IMR-90 (cell line): ENCODE measurements at regions of chr19 and their contacts with region 1.

Region 1: DNA sequence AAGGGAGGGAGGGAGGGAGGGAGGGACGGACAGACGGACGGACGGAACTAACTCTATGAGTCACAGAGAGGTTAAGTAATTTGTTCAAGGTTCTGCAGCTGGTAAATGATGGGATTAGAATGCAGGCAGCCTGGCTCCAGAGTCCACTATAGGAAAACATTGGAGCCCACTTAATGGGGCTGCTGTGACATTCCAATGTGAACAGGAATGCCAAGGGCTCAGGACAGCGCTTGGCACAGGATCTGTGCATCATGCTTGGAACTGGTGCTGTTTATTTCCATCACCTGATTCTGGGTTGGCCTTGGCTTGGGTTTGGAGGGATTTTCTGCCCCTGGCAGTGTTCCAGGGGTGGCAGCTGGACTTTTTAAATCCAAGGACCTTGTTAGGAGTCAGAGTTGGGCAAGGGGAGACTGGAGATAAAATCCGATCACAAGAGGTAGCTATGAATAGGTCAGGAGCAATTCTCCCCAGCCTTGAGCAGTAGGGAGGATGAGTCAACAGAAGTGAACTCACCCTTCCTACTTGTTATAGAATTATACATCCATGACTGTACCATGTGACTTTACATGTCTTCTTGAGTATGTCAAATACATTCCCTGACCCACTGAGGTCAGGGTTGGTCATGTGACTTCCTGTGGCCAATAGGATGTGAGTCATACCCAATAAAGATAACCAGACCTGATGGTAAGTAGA is 7.8 kb upstream of the HIF3A start:
- DNase-seq: peak; percentile 82
- ATAC-seq: peak; percentile 84
- H3K4me3 ChIP-seq: no peak overlapping the region
- H3K27ac ChIP-seq: no peak overlapping the region
- H3K4me1 ChIP-seq: no peaks in the 10 kb centered on the region; the same call in 1 of the 2 replicates
- H3K27me3 ChIP-seq: peaks cover under 1% of the 10 kb centered on the region
- CTCF ChIP-seq: no peak
- POLR2A ChIP-seq: no peak
- RAD21 ChIP-seq: no peak

Region 2: GRCh38 chr19:46337487-46337886 is 48.4 kb after region 1 on chr19:
- CTCF ChIA-PET with region 1: no interaction called
- POLR2A ChIA-PET with region 1: no interaction called
- dilution Hi-C with region 1: no loop called
- in situ Hi-C with region 1: no loop called
- intact Hi-C with region 1: no loop called
- DNase-seq: no peak
- ATAC-seq: no peak
- H3K4me3 ChIP-seq: no peak overlapping the region
- H3K27ac ChIP-seq: no peak overlapping the region
- H3K4me1 ChIP-seq: no peaks in the 10 kb centered on the region
- H3K27me3 ChIP-seq: peaks cover 29% of the 10 kb centered on the region
- CTCF ChIP-seq: no peak
- POLR2A ChIP-seq: no peak
- RAD21 ChIP-seq: no peak

Region 3: GRCh38 chr19:46384396-46384795 is 95.4 kb after region 1 on chr19:
- CTCF ChIA-PET with region 1: no interaction called
- POLR2A ChIA-PET with region 1: no interaction called
- dilution Hi-C with region 1: no loop called
- in situ Hi-C with region 1: loop called (anchors 10 kb)
- intact Hi-C with region 1: no loop called
- DNase-seq: no peak
- ATAC-seq: no peak
- H3K4me3 ChIP-seq: no peak overlapping the region
- H3K27ac ChIP-seq: no peak overlapping the region
- H3K4me1 ChIP-seq: no peaks in the 10 kb centered on the region
- H3K27me3 ChIP-seq: no peaks in the 10 kb centered on the region
- CTCF ChIP-seq: no peak
- POLR2A ChIP-seq: no peak
- RAD21 ChIP-seq: no peak